MCF 10A (cell line): ENCODE measurements at regions of chr14 and their contacts with region 1.

Region 1: GRCh38 chr14:30270200-30271161 is 288.5 kb upstream of the G2E3 start:
- DNase-seq: peak; percentile 90
- H3K4me3 Mint-ChIP-seq: peak overlapping the region; percentile 2
- H3K27ac Mint-ChIP-seq: peak overlapping the region; percentile 40
- H3K4me1 Mint-ChIP-seq: peaks cover 20% of the 10 kb centered on the region
- H3K27me3 Mint-ChIP-seq: no peaks in the 10 kb centered on the region
- CTCF ChIP-seq: peak; percentile 80

Region 2: DNA sequence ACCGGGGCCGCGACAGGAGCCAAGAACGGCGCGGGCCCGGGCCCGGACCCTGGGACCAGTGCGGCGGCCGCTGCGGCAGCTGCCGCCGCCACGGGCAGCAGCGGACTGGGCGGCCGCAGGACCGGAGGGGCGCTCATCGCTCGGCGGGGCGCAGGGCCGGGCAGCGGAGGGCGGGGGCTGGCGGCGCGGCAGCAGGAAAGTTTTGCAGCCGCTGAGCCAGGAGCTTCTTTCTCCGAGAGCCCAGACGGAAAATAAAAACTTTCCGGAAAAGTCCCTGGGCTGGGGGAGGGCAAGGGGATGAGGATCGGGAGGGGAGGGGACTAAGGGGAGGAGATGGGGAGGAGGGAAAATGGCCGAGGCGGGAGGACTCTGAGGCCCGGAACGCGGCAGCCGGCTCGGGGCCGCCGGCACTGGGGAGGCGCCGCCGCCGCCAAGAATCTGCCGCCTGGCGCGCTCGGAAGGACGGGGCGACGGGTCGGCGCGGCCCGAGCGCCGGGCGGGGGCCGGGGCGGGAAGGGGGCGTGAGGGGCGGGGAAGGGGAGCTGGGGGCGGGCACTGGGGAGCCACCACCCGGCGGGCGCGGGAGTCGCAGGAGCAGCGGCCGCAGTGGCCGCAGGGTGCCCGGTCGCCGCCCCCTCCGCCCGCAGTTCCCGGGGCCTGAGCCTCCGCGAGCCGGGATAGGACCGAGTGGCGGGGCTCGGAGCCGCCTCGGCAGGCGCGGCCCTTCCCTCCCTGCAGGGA is 342.9 kb before region 1 on chr14 and contains the start of gene PRKD1:
- CTCF ChIA-PET with region 1: no interaction called
- POLR2A ChIA-PET with region 1: no interaction called
- intact Hi-C with region 1: loop called (anchors 10 kb)
- DNase-seq: peak; percentile 50
- H3K4me3 Mint-ChIP-seq: peak within 1 kb of the TSS; percentile 98
- H3K27ac Mint-ChIP-seq: peak within 1 kb of the TSS; percentile 26
- H3K4me1 Mint-ChIP-seq: peaks cover 38% of the 10 kb centered on the region
- H3K27me3 Mint-ChIP-seq: no peaks in the 10 kb centered on the region
- CTCF ChIP-seq: peak; percentile 17
- total RNA-seq, gene PRKD1: 7.9 and 8.8 TPM in 2 replicates

Region 3: DNA sequence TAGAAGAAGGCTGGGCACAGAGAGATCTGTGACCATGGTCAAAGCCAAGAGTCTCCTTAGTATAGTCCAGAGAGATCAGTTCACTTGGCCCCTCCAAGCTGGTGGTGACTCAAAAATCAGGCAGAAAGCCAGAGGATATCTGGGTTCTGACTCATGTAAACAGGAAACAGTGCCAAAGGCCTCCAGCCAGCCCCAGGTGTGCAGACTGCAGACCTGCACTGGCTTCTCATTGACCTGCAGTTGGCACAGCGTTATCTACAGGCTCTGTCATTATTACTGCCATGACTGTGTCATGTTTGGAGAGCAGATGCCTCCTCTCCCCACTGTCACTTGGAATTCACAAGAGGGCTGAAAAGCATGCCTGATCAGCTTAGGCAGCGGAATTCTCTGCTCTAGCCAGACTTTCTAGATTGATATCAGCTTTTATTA is 47.1 kb before region 1 on chr14:
- CTCF ChIA-PET with region 1: interaction called, 82 read pairs
- POLR2A ChIA-PET with region 1: interaction called, 6 read pairs
- intact Hi-C with region 1: loop called (anchors 1 kb)
- DNase-seq: peak; percentile 97
- H3K4me3 Mint-ChIP-seq: peak overlapping the region; percentile 16
- H3K27ac Mint-ChIP-seq: peak overlapping the region; percentile 95
- H3K4me1 Mint-ChIP-seq: peaks cover 50% of the 10 kb centered on the region
- H3K27me3 Mint-ChIP-seq: no peaks in the 10 kb centered on the region
- CTCF ChIP-seq: no peak

Region 4: GRCh38 chr14:30252783-30253674 is 17.5 kb before region 1 on chr14:
- CTCF ChIA-PET with region 1: interaction called, 115 read pairs
- POLR2A ChIA-PET with region 1: interaction called, 4 read pairs
- intact Hi-C with region 1: no loop called
- DNase-seq: peak; percentile 21
- H3K4me3 Mint-ChIP-seq: no peak overlapping the region
- H3K27ac Mint-ChIP-seq: peak overlapping the region; percentile 84
- H3K4me1 Mint-ChIP-seq: peaks cover 26% of the 10 kb centered on the region
- H3K27me3 Mint-ChIP-seq: no peaks in the 10 kb centered on the region
- CTCF ChIP-seq: no peak

Region 5: GRCh38 chr14:30291216-30291615 is 20.7 kb after region 1 on chr14:
- CTCF ChIA-PET with region 1: interaction called, 163 read pairs
- POLR2A ChIA-PET with region 1: interaction called, 3 read pairs
- intact Hi-C with region 1: no loop called
- DNase-seq: peak; percentile 62
- H3K4me3 Mint-ChIP-seq: no peak overlapping the region
- H3K27ac Mint-ChIP-seq: no peak overlapping the region
- H3K4me1 Mint-ChIP-seq: peaks cover 5% of the 10 kb centered on the region
- H3K27me3 Mint-ChIP-seq: no peaks in the 10 kb centered on the region
- CTCF ChIP-seq: no peak